ENCODE measurements at regions of chr7 and their contacts with region 1.

Region 1: DNA sequence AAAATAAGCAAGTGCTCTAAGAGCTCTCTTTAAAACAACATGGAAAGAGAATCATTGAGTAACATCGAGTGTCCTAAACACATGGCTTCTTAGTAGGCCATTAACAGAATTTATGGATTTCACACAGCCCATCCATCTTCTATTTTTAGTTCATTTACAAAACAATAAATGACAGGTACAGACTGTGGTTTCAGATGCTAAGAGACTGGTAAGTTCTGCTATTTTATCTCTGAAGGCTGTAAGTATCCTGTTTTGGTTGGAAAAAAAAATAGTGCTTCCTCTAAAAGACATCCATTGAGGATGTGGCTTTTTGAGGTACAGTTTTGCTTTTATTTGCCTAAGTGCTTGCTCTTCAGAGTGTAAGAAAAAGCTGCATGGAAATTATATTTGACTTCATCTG is 27.4 kb upstream of the GNAI1 start:
- DNase-seq: no peak
- ATAC-seq: peak; percentile 81
- H3K4me3 Mint-ChIP-seq: no peak overlapping the region
- H3K27ac Mint-ChIP-seq: peak overlapping the region; percentile 50
- H3K4me1 Mint-ChIP-seq: peaks cover 29% of the 10 kb centered on the region
- H3K27me3 Mint-ChIP-seq: peaks cover 2% of the 10 kb centered on the region

Region 2: GRCh38 chr7:80095545-80095944 is 11.7 kb before region 1 on chr7:
- CTCF ChIA-PET with region 1: interaction called, 24 read pairs
- POLR2A ChIA-PET with region 1: no interaction called
- DNase-seq: no peak
- ATAC-seq: no peak
- H3K4me3 Mint-ChIP-seq: no peak overlapping the region
- H3K27ac Mint-ChIP-seq: no peak overlapping the region
- H3K4me1 Mint-ChIP-seq: no peaks in the 10 kb centered on the region
- H3K27me3 Mint-ChIP-seq: no peaks in the 10 kb centered on the region

Measured in activated CD8-positive, alpha-beta T cell treated with anti-CD3 and anti-CD28 coated beads, Interleukin-2, amount 10 ng/mL, durations not matched to agents 7 days and 5 days (primary cell).